Right ventricle myocardium inferior (tissue), 1 donor: ENCODE measurements at regions of chr10 and their contacts with region 1.

Region 1: DNA sequence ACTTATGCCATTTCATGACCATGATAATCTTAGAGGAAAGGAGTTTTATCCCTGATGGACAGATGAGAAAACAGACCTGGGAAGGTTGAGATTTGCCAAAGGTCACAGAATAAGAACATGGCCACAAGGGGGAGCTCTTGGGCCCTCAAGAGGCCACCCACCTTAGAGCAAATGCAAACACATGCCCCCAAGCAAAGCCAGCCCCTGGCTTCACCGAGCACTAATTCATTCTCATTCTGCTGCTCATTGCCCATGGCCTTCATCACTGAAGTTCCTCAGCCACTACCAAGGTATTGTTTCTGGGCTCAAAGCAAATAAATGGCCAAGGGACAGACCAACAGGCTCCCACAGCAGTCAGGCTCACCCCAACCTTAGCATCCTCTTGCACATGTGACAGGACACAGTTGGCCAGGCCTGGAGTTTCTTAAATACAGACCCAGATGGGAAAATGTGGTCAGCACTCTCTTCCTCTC is 44.2 kb downstream of the PDLIM1 start:
- DNase-seq: peak; percentile 83
- ATAC-seq: peak; percentile 51

Region 2: DNA sequence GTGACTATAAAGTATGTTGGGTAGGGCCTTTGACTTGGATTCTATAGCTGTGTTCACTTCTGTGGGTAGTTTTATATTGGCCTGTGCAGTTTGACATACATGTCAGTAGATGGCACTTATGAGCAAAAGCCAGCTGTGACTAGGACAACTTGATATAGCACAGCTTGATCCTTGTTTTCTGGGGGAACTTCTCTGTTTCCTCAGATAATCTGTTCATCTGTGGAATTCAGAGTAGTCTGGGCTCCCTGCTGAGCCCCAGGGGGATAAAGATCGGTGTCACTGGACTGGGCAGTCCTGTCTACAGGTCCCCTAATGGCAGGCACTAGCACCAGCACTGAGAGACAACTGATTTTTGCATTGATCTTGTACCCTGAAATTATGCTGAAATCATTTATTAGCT is 282.7 kb before region 1 on chr10:
- intact Hi-C with region 1: no loop called
- DNase-seq: no peak
- ATAC-seq: no peak

Region 3: GRCh38 chr10:95183271-95184230 is 63.1 kb before region 1 on chr10:
- intact Hi-C with region 1: loop called (anchors 1 kb)
- DNase-seq: peak; percentile 93
- ATAC-seq: peak; percentile 98

Region 4: GRCh38 chr10:95290461-95291364 is 44.1 kb after region 1 on chr10 and contains the start of gene PDLIM1:
- intact Hi-C with region 1: loop called (anchors 2 kb)
- DNase-seq: peak; percentile 89
- ATAC-seq: peak; percentile 89
- total RNA-seq, gene PDLIM1: 273 TPM

Region 5: DNA sequence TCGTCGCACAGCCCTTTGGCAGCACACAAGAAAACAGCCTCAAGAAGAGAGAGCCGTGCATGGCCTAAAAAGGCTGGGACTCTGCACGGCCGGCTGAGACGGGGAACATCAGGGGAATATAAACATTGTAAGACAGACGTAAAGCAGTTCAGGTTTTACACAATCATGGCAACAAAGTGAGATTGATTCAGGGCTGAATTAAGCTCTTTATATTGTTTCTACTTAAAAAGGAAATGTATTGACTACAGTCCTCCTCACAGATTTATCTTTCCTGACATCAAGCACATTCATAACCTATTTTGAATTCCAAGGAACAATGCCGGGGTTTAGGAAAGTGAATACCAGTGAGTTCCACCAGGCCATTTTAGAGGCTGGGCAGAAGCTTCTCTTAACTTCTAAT is 289.4 kb after region 1 on chr10:
- intact Hi-C with region 1: no loop called
- DNase-seq: no peak
- ATAC-seq: no peak

Region 6: GRCh38 chr10:95601116-95601719 is 354.6 kb after region 1 on chr10:
- intact Hi-C with region 1: loop called (anchors 10 kb)
- DNase-seq: no peak
- ATAC-seq: peak; percentile 93